Heart right ventricle (tissue), 16 donors: ENCODE measurements at regions of chr15 and their contacts with region 1.

Region 1: DNA sequence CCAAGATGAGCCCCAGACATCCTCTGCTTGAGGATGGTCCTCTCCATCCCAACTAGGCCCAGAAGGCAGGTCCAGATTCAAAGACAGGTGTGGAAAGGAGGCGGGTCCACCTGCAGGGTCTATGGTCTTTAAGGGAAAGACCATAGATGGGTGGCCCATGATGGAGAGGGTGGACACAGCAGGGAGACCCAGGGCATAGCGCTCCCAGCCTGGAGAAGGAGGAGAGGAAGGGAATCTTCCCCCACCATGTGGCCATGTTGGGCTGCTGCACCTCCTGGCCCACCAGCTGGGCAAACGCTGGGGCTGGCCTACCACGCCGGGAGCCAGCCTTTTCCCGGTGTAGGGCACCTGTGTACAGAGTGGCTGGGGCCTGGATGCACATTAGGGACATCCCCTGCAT is 265.2 kb upstream of the TLE3 start:
- DNase-seq: peak in 1 of 2 donors; percentile 32
- ATAC-seq: peak; percentile 38 to 86 (median 78)
- H3K4me3 ChIP-seq: no peak overlapping the region
- H3K27ac ChIP-seq: no peak overlapping the region
- H3K4me1 ChIP-seq: no peaks in the 10 kb centered on the region
- H3K27me3 ChIP-seq: peaks cover 0 to 43% (median 15%) of the 10 kb centered on the region in 7 donors
- CTCF ChIP-seq: peak; percentile 26 to 84 (median 77)

Region 2: GRCh38 chr15:69475769-69476358 is 887.0 kb before region 1 on chr15:
- intact Hi-C with region 1: loop called in 3 of 10 experiments (anchors 10 kb)
- DNase-seq: peak; percentile 73 to 81
- ATAC-seq: peak; percentile 65 to 89 (median 80)
- H3K4me3 ChIP-seq: no peak overlapping the region
- H3K27ac ChIP-seq: no peak overlapping the region
- H3K4me1 ChIP-seq: peaks cover 0 to 3% (median 0%) of the 10 kb centered on the region in 9 donors
- H3K27me3 ChIP-seq: peaks cover 0 to 8% (median 0%) of the 10 kb centered on the region in 7 donors
- CTCF ChIP-seq: peak; percentile 82 to 97 (median 94)

Region 3: DNA sequence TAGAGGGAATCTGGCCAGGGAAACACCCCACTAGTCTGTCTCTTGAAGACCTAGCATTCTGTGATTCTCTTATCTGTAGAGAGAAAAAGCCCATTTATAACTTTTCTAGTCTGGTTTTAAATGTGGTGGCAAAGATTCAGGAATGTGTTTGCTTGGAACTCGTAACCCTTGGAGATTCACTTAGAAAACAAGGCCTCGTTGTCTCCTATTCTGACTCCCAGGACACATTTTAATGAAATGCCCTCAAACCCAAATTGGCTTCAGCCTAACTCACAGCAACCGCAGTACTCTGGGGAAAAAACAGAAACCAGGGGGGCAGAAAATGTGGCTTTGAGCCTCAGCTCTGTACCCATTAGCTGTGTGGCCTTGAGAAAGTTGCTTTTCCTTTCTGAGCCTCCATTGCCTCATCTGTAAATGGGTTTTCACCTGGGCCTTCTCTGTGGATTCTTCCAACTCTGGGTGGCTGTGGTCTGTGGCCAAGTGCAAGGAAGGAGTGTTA is 873.8 kb before region 1 on chr15:
- intact Hi-C with region 1: loop called in 1 of 10 experiments (anchors 10 kb)
- DNase-seq: no peak
- ATAC-seq: peak in 5 of 8 donors; percentile 12 to 53 (median 28)
- H3K4me3 ChIP-seq: no peak overlapping the region
- H3K27ac ChIP-seq: peak overlapping the region in 2 of 10 donors; percentile 4 to 16
- H3K4me1 ChIP-seq: peaks cover 0 to 14% (median 0%) of the 10 kb centered on the region in 9 donors
- H3K27me3 ChIP-seq: no peaks in the 10 kb centered on the region
- CTCF ChIP-seq: no peak

Region 4: DNA sequence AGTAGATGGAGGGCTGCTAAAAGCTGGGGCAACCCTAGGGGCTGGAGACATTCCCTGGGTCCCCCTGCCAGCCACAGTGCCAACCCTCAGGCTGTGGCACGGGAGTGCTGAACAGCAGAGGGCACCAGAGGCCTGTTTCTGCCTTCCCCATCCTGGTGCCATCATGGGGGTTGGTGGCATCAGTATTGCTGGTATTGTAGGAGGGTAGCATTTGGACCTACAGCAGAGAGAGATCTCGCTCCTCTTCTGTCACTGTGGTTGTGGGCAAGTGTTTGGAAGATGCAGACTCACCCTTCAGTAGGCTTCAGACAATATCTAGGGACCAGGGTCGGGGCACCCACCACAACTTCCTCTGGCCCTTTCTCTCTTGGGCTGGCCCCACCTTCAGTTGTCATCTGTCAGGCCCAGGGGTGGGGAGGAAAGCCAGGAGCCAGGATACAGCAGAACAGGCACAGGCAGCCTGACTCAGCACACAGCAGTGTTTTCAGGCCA is 786.8 kb before region 1 on chr15:
- intact Hi-C with region 1: loop called in 2 of 10 experiments (anchors 10 kb)
- DNase-seq: peak; percentile 43 to 58
- ATAC-seq: peak; percentile 75 to 92 (median 86)
- H3K4me3 ChIP-seq: no peak overlapping the region
- H3K27ac ChIP-seq: no peak overlapping the region
- H3K4me1 ChIP-seq: peaks cover 0 to 31% (median 0%) of the 10 kb centered on the region in 9 donors
- H3K27me3 ChIP-seq: peaks cover 0 to 31% (median 17%) of the 10 kb centered on the region in 7 donors
- CTCF ChIP-seq: peak; percentile 49 to 78 (median 71)

Region 5: DNA sequence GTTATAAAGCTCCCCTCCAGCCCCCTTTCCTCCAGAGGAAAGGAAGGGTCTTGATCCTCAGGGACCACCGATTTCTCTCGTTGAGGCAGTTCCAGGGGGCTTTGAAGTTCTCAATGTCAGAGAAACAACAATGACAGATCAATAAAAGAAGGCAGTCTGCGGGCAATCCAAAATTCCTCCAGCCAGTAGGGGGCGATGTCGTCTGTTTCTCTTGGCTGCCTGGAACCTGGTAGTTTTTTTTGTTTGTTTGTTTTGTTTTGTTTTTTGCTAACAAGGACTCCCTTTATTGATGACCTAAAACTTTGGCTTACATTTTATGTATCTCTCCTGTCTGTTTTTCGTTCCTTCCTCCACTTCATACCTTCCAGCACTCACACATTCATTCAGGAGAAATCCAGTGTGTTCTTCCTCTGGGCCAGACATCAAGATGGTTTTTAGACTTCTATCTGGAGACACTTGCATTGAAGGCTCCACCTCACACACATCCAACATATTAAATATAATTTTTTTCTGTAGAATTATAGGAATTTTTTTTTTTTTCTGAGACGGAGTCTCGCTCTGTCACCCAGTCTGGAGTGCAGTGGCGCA is 633.6 kb before region 1 on chr15:
- intact Hi-C with region 1: loop called in 5 of 10 experiments (anchors 10 kb)
- DNase-seq: peak in 1 of 2 donors; percentile 17
- ATAC-seq: no peak
- H3K4me3 ChIP-seq: no peak overlapping the region
- H3K27ac ChIP-seq: no peak overlapping the region
- H3K4me1 ChIP-seq: peaks cover 0 to 44% (median 0%) of the 10 kb centered on the region in 9 donors
- H3K27me3 ChIP-seq: peaks cover 0 to 32% (median 9%) of the 10 kb centered on the region in 7 donors
- CTCF ChIP-seq: peak; percentile 64 to 84 (median 73)

Region 6: GRCh38 chr15:69735121-69735520 is 627.8 kb before region 1 on chr15:
- intact Hi-C with region 1: loop called in 3 of 10 experiments (anchors 10 kb)
- DNase-seq: no peak
- ATAC-seq: no peak
- H3K4me3 ChIP-seq: no peak overlapping the region
- H3K27ac ChIP-seq: no peak overlapping the region
- H3K4me1 ChIP-seq: peaks cover 0 to 9% (median 0%) of the 10 kb centered on the region in 9 donors
- H3K27me3 ChIP-seq: peaks cover 0 to 34% (median 12%) of the 10 kb centered on the region in 7 donors
- CTCF ChIP-seq: no peak

Region 7: DNA sequence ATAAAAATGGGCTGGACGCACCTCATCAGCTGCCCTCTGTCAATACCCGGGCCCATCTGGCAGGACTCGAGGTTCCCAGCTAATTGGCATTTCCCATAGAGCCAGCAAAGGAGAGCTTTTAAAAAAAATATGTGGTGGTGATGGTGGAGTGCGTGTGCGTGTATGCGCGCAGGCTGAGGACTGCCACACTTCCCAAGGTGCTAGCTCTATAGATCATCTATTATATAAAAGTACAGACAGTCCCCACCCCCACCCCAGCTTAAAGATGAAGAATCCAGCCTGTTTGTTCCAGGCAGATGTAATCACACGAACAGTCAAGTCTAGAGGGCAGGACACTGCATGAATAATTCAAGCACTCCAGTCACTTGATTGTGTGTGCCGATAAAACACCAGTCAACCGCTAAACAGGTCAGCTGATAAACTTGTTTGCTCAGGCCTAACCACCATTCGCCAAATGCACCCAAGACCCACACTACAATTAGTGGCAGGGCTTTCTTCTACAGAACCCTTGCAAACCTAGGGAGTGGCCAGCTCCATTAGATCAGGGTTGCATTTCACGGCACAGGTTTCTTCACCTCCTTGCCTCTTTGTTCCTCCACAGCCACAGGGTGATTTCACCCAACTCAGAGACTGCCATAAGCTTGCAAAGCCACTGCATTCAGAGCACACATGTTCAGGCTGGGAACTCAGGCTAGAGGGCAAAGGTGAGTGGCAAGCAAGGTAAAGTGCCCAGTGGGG is 271.0 kb before region 1 on chr15:
- intact Hi-C with region 1: loop called in 3 of 10 experiments (anchors 5 to 10 kb)
- DNase-seq: no peak
- ATAC-seq: no peak
- H3K4me3 ChIP-seq: no peak overlapping the region
- H3K27ac ChIP-seq: no peak overlapping the region
- H3K4me1 ChIP-seq: peaks cover 13 to 90% (median 79%) of the 10 kb centered on the region in 9 donors
- H3K27me3 ChIP-seq: peaks cover 0 to 4% (median 0%) of the 10 kb centered on the region in 7 donors
- CTCF ChIP-seq: no peak